ENCODE measurements at regions of chr12 and their contacts with region 1.

Region 1: GRCh38 chr12:19908825-19909224 is 459.5 kb upstream of the PDE3A start:
- DNase-seq: no peak
- H3K4me3 ChIP-seq: no peak overlapping the region
- H3K27ac ChIP-seq: no peak overlapping the region
- H3K4me1 ChIP-seq: no peaks in the 10 kb centered on the region
- H3K27me3 ChIP-seq: no peaks in the 10 kb centered on the region
- CTCF ChIP-seq: no peak
- POLR2A ChIP-seq: no peak

Region 2: DNA sequence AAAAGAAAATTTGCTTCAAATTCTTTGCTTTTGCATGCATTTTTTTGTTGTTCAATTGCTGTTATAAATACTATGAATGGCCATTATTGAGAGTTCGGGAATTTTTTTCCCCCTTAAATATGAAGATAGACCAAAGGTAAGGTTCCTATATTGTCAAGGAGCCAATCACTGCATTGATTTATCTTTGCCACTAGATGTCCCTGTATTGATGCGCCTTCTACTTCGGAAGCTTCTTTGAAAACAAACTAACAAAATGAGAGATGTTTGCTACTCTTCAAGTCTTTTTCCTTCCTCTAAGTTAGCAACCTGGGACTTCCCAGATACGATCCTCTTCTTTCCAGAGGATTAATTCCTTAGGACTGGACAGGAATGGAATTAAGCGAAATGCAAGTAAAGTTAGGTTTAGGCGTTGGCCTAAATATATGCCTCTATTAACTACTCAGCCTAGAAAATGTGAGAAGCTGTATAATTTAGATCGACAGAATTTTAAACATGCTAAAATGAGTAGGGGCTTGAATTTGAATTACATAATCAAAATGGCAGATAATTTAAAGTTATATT is 151.4 kb before region 1 on chr12:
- intact Hi-C with region 1: loop called (anchors 10 kb)
- DNase-seq: no peak
- H3K4me3 ChIP-seq: no peak overlapping the region
- H3K27ac ChIP-seq: no peak overlapping the region
- H3K4me1 ChIP-seq: no peaks in the 10 kb centered on the region
- H3K27me3 ChIP-seq: no peaks in the 10 kb centered on the region
- CTCF ChIP-seq: peak in 3 of 4 experiments; percentile 22 to 63 (median 54)
- POLR2A ChIP-seq: no peak